MCF 10A (cell line): ENCODE measurements at regions of chr1 and their contacts with region 1.

Region 1: GRCh38 chr1:203267347-203267846 is 37.9 kb upstream of the BTG2 start:
- DNase-seq: peak; percentile 98
- H3K4me3 Mint-ChIP-seq: peak overlapping the region; percentile 77
- H3K27ac Mint-ChIP-seq: no peak overlapping the region
- H3K4me1 Mint-ChIP-seq: peaks cover 12% of the 10 kb centered on the region
- H3K27me3 Mint-ChIP-seq: peaks cover 14% of the 10 kb centered on the region
- CTCF ChIP-seq: peak; percentile 99

Region 2: GRCh38 chr1:202998836-202999750 is 268.3 kb before region 1 on chr1:
- CTCF ChIA-PET with region 1: interaction called, 12 read pairs
- POLR2A ChIA-PET with region 1: no interaction called
- intact Hi-C with region 1: no loop called
- DNase-seq: peak; percentile 85
- H3K4me3 Mint-ChIP-seq: no peak overlapping the region
- H3K27ac Mint-ChIP-seq: no peak overlapping the region
- H3K4me1 Mint-ChIP-seq: peaks cover 15% of the 10 kb centered on the region
- H3K27me3 Mint-ChIP-seq: peaks cover 45% of the 10 kb centered on the region
- CTCF ChIP-seq: peak; percentile 96

Region 3: GRCh38 chr1:203117611-203118575 is 149.5 kb before region 1 on chr1:
- CTCF ChIA-PET with region 1: interaction called, 39 read pairs
- POLR2A ChIA-PET with region 1: no interaction called
- intact Hi-C with region 1: loop called (anchors 5 kb)
- DNase-seq: peak; percentile 85
- H3K4me3 Mint-ChIP-seq: no peak overlapping the region
- H3K27ac Mint-ChIP-seq: no peak overlapping the region
- H3K4me1 Mint-ChIP-seq: peaks cover 10% of the 10 kb centered on the region
- H3K27me3 Mint-ChIP-seq: peaks cover 42% of the 10 kb centered on the region
- CTCF ChIP-seq: peak; percentile 99

Region 4: DNA sequence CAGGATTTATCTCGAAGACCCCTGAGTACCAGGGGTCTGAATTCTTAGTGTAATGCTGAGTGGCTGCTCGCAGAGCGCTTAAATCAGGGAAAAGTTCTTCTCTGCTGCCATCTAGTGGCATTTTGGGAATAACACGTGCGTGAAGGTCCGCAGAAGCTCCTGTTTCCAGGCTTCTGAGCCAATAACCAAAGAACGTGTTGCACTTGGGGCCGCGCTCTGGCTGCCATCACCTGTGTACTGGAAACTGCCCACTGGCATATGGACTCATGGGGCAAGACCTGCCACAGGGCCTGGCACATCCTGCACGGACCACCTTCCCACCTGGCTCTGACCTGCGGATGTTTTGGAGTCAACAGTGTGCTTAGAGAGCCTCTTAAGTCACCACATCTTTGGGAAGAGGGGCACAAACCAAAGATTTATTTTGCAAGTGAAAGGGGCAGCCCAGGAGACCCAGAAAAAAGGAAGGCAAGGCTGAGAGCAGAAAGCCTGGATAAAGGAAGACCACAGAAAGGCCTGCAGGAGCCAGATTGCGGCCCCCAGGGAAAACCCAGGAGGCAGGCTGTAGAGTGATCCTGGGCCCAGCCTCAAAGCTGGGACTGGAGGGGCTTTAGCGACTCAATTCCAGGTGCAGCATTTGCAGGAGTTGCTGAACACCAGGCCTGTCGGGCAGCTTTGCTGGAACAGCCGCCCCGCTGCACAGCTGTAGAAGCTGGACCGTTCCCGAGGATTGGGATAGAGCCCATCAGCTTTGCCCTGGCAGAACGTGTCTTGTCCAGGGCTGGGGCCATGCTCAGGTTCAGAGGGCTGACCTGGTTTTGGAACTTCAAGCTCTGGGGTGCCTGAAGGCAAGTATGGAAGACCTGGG is 50.9 kb before region 1 on chr1:
- CTCF ChIA-PET with region 1: interaction called, 159 read pairs
- POLR2A ChIA-PET with region 1: interaction called, 4 read pairs
- intact Hi-C with region 1: loop called (anchors 1 kb)
- DNase-seq: peak; percentile 89
- H3K4me3 Mint-ChIP-seq: no peak overlapping the region
- H3K27ac Mint-ChIP-seq: no peak overlapping the region
- H3K4me1 Mint-ChIP-seq: no peaks in the 10 kb centered on the region
- H3K27me3 Mint-ChIP-seq: peaks cover 33% of the 10 kb centered on the region
- CTCF ChIP-seq: peak; percentile 93

Region 5: GRCh38 chr1:203299169-203299568 is 31.8 kb after region 1 on chr1:
- CTCF ChIA-PET with region 1: interaction called, 33 read pairs
- POLR2A ChIA-PET with region 1: no interaction called
- intact Hi-C with region 1: no loop called
- DNase-seq: no peak
- H3K4me3 Mint-ChIP-seq: no peak overlapping the region
- H3K27ac Mint-ChIP-seq: no peak overlapping the region
- H3K4me1 Mint-ChIP-seq: peaks cover 11% of the 10 kb centered on the region
- H3K27me3 Mint-ChIP-seq: peaks cover 10% of the 10 kb centered on the region
- CTCF ChIP-seq: no peak

Region 6: GRCh38 chr1:203463469-203464062 is 196.2 kb after region 1 on chr1:
- CTCF ChIA-PET with region 1: interaction called, 14 read pairs
- POLR2A ChIA-PET with region 1: interaction called, 3 read pairs
- intact Hi-C with region 1: no loop called
- DNase-seq: no peak
- H3K4me3 Mint-ChIP-seq: no peak overlapping the region
- H3K27ac Mint-ChIP-seq: no peak overlapping the region
- H3K4me1 Mint-ChIP-seq: peaks cover 28% of the 10 kb centered on the region
- H3K27me3 Mint-ChIP-seq: peaks cover 35% of the 10 kb centered on the region
- CTCF ChIP-seq: no peak